H1 (cell line): ENCODE measurements at regions of chr10 and their contacts with region 1.

Region 1: GRCh38 chr10:121069061-121069850 is 218.1 kb downstream of the WDR11 start:
- DNase-seq: no peak
- H3K4me3 ChIP-seq: no peak overlapping the region
- H3K27ac ChIP-seq: no peak overlapping the region
- H3K4me1 ChIP-seq: no peaks in the 10 kb centered on the region
- H3K27me3 ChIP-seq: no peaks in the 10 kb centered on the region
- CTCF ChIP-seq: no peak
- EP300 ChIP-seq: no peak
- POLR2A ChIP-seq: no peak
- RAD21 ChIP-seq: no peak

Region 2: GRCh38 chr10:120948889-120949608 is 120.2 kb before region 1 on chr10:
- CTCF ChIA-PET with region 1: interaction called, 13 read pairs
- POLR2A ChIA-PET with region 1: no interaction called
- DNase-seq: peak; percentile 44 to 88
- H3K4me3 ChIP-seq: peak overlapping the region; percentile 16 to 68 (median 52)
- H3K27ac ChIP-seq: no peak overlapping the region
- H3K4me1 ChIP-seq: peaks cover 5 to 21% (median 13%) of the 10 kb centered on the region in 4 experiments
- H3K27me3 ChIP-seq: peaks cover 11 to 16% (median 13%) of the 10 kb centered on the region in 4 experiments
- CTCF ChIP-seq: peak; percentile 77 to 92 (median 90)
- EP300 ChIP-seq: no peak
- POLR2A ChIP-seq: no peak
- RAD21 ChIP-seq: peak; percentile 95 to 97

Region 3: DNA sequence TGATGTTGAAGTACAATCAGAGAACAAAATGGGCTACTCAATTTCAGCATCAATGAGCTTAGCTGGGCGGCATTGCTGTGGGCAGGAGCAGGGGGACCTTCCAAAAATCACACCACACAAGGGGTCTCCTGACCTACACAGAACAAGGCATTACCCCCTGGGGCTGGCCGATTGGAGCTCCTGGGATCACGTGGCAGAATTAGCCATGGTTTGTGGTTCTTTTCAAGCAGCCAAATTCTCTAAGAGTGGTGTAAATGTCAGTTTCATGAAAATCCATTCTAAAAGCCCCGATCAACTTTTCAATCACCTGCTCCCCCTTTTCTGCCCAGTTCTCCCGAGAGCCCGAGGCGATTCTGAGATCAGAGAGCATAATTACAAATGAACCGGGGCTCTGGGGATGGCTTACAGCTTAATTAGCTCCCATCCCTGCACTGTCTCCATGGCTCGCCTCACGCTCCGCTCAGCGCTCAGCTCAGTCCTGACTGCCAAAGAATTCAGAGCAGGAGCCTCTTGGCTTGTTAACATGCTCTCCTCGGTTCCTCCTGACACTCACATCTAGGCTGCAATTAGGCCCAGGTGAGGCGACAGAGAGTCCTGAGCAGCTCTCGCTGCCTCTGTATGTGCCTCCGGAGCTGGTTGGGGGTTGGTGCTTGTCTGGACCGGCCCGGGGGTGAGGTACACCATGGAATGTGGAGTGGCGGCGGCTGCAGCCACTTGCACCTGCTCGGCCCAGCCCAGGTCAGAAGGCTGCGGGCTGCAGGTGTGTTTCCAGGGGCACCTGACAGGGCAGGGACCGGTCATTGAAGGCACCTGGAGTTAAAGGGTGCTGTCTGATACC is 106.3 kb before region 1 on chr10:
- CTCF ChIA-PET with region 1: interaction called, 12 read pairs
- POLR2A ChIA-PET with region 1: no interaction called
- DNase-seq: peak in 1 of 2 experiments; percentile 68
- H3K4me3 ChIP-seq: no peak overlapping the region
- H3K27ac ChIP-seq: no peak overlapping the region
- H3K4me1 ChIP-seq: peaks cover 6 to 13% (median 8%) of the 10 kb centered on the region in 4 experiments; a peak in 6 of 7 replicates
- H3K27me3 ChIP-seq: no peaks in the 10 kb centered on the region; a peak in 1 of 7 replicates
- CTCF ChIP-seq: peak; percentile 14 to 33 (median 26); a peak in 3 of 4 replicates
- EP300 ChIP-seq: no peak
- POLR2A ChIP-seq: no peak
- RAD21 ChIP-seq: peak in 1 of 2 experiments; percentile 36; a peak in 1 of 4 replicates

Region 4: GRCh38 chr10:121080281-121080891 is 11.1 kb after region 1 on chr10:
- CTCF ChIA-PET with region 1: interaction called, 27 read pairs
- POLR2A ChIA-PET with region 1: no interaction called
- DNase-seq: no peak
- H3K4me3 ChIP-seq: no peak overlapping the region
- H3K27ac ChIP-seq: no peak overlapping the region
- H3K4me1 ChIP-seq: peaks cover 0 to 7% (median 0%) of the 10 kb centered on the region in 4 experiments; a peak in 1 of 7 replicates
- H3K27me3 ChIP-seq: no peaks in the 10 kb centered on the region; a peak in 1 of 7 replicates
- CTCF ChIP-seq: no peak
- EP300 ChIP-seq: no peak
- POLR2A ChIP-seq: no peak
- RAD21 ChIP-seq: no peak

Region 5: DNA sequence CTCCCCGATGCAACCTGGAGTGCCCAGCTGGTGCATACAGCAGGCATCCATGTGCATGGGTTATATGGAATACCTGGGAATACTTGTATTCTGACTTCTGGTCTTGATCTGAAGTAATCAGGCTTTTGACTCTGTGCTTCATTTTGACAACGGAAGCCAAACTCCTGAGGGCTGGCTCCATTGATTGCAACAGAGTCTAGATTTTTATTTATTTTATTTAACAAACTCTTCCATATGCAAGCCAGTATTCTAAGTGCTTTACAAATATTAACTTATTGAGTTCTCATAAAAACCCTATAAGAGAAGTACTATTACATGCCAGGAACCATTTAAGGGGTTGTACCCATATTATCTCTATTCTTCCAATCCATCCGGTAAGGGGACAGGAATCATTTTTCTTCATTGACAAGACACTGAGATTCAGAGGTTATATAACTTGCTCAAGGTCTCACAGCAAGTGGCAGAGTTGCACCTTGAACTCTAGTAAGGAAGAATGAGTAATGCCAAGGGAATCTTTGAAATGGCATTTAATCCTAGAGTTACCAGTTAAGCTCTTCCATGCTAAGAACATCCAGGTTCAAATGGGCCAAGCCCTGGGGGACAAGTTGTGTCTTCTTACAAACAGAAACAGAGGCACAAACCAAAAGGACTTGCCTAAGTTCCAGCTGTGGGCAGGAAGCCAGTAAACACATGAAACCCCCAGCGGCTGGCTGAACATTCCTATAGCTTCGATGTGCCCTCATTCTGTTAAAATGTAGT is 22.9 kb after region 1 on chr10:
- CTCF ChIA-PET with region 1: interaction called, 21 read pairs
- POLR2A ChIA-PET with region 1: no interaction called
- DNase-seq: no peak
- H3K4me3 ChIP-seq: no peak overlapping the region
- H3K27ac ChIP-seq: no peak overlapping the region
- H3K4me1 ChIP-seq: peaks cover 0 to 3% (median 0%) of the 10 kb centered on the region in 4 experiments; a peak in 1 of 7 replicates
- H3K27me3 ChIP-seq: peaks cover 0 to 2% (median 0%) of the 10 kb centered on the region in 4 experiments; a peak in 1 of 7 replicates
- CTCF ChIP-seq: no peak
- EP300 ChIP-seq: no peak
- POLR2A ChIP-seq: no peak
- RAD21 ChIP-seq: no peak

Region 6: DNA sequence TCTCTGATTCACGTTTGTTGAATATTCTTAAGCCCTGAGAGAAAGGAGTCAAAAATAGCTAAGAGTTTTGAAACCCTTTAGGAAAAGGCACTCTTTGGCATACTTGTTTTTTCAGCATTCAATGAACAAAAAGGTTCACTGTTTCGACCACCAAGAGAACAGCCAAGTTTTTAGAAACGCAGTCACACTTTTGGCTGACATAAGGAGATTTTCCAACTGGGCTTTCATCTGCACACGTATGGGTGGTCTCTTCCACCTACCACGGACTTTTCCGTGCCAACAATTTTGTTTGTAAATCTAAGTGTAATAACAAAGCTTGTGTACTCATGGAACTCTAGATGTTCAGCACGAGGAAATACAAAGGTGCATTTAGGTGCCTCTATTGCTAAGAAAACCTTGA is 52.2 kb after region 1 on chr10:
- CTCF ChIA-PET with region 1: no interaction called
- POLR2A ChIA-PET with region 1: no interaction called
- DNase-seq: no peak
- H3K4me3 ChIP-seq: no peak overlapping the region
- H3K27ac ChIP-seq: no peak overlapping the region
- H3K4me1 ChIP-seq: no peaks in the 10 kb centered on the region
- H3K27me3 ChIP-seq: no peaks in the 10 kb centered on the region
- CTCF ChIP-seq: no peak
- EP300 ChIP-seq: no peak
- POLR2A ChIP-seq: no peak
- RAD21 ChIP-seq: no peak